ENCODE measurements at regions of chr17 and their contacts with region 1.

Region 1: DNA sequence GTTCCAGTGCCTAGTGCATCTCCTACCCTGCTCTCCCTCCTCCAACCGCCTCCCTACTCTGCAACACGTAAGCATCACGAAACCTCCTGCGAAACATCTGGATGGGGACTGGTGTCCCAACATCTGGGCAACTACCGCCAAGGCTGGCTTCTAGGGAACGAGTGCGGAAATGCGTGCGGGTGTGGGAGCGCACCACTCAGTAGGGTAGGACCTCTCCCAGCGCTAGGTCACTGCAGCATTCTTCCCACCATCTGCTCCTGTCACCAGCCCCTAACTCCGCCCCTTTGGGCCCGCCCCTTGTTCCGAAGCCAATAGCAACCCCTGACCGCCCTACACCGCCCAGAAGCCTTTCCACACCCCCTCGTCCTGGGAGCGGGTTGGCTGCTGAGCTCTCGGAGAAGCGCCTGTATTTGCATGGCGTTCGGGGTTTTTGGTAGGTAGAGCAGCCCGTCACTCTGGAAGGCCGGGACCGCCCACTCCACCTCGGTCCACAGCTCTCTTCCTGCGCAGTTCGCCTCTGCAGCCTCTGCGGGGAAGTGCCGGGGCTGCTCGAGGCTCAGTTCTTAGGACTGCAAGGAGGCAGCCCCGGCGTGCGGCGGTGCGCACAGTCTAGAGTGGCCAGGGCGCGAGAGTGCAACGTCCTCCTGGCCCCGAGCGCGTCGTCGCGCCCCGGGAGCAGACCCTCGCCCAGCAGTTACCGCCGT is at the start of gene HS3ST3B1:
- DNase-seq: peak; percentile 40
- H3K4me3 ChIP-seq: peak within 1 kb of the TSS; percentile 62
- H3K27ac ChIP-seq: no peak within 1 kb of the TSS
- H3K4me1 ChIP-seq: peaks cover 16% of the 10 kb centered on the region
- CTCF ChIP-seq: no peak
- total RNA-seq, gene HS3ST3B1: 0.03 TPM in 1 of 2 replicates, not detected in the other

Region 2: DNA sequence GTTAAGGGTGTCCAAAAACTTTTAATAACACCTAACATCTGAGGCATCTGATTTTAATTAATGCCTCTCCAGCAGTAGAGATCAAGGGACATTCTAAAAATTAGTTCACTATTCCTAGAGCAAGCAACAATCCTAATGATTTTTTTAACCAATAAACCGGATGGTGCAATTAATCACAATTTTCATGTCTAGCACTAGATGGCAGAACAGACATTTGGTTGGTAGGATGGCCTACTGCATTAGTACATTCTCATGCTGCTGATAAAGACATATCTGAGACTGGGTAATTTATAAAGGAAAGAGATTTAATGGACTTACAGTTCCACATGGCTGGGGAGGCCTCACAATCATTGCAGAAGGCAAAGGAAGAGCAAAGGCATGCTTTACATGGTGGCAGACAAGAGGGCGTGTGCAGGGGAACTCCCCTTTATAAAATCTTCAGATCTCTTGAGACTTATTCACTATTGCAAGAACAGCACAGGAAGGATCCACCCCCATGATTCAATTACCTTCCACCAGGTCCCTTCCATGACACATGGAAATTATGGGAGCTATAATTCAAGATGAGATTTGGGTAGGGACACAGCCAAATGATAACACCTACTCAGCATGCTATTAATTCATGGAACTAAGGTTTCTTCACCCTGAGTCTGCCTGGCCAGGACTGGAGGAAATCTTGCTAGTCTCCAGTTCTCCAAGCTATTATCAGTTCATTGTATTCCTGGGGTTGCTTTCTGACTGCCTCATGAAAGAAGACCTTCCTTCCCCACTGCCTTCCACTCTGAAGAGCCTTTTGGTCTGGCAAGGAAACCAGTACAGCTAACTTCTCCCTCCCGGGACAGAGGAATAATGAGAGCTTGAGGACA is 723.8 kb before region 1 on chr17:
- CTCF ChIA-PET with region 1: no interaction called
- POLR2A ChIA-PET with region 1: interaction called, 3 read pairs
- intact Hi-C with region 1: loop called (anchors 5 kb)
- DNase-seq: peak; percentile 22
- H3K4me3 ChIP-seq: no peak overlapping the region
- H3K27ac ChIP-seq: no peak overlapping the region
- H3K4me1 ChIP-seq: no peaks in the 10 kb centered on the region
- CTCF ChIP-seq: peak; percentile 65

Region 3: DNA sequence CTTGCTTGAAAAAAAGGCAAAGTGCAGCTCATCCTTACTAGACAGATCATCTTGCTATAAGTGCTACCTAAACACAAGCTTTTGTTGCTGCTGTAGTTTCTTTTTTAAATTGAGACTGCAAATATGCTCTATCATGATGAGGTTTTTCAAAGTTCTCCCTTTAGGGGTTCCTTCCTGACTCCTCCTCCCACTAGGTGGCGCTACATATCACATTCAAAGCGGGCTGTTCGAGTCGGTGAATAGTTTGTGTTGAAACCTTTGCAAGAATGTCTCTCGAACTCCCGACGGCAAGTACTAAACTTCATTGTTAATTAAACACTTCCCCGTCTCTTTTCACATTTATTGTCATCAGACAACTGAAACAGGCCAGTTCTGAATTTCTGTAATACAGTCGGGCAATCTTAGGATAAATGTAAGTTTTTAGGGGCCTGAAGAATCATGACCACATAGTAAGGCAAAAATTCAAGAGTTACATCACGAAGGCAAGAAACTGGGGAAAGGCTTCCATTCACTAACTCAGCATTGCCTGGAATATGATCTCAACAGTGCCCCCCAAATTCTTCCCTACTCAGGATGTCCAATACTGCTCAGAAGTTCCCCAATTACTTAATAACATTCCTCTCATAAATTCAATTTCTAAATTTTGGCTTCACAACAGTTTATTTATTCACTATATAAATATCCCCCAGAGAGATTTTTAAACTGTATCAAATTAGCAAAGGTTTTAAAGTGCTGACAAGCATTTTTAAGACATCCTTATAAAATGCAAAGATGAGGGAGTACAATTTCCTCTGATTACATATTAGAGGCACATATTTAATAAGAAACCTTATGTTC is 705.7 kb before region 1 on chr17:
- CTCF ChIA-PET with region 1: no interaction called
- POLR2A ChIA-PET with region 1: interaction called, 3 read pairs
- intact Hi-C with region 1: loop called (anchors 5 kb)
- DNase-seq: peak; percentile 81
- H3K4me3 ChIP-seq: no peak overlapping the region
- H3K27ac ChIP-seq: no peak overlapping the region
- H3K4me1 ChIP-seq: peaks cover 10% of the 10 kb centered on the region
- CTCF ChIP-seq: peak; percentile 98

Region 4: DNA sequence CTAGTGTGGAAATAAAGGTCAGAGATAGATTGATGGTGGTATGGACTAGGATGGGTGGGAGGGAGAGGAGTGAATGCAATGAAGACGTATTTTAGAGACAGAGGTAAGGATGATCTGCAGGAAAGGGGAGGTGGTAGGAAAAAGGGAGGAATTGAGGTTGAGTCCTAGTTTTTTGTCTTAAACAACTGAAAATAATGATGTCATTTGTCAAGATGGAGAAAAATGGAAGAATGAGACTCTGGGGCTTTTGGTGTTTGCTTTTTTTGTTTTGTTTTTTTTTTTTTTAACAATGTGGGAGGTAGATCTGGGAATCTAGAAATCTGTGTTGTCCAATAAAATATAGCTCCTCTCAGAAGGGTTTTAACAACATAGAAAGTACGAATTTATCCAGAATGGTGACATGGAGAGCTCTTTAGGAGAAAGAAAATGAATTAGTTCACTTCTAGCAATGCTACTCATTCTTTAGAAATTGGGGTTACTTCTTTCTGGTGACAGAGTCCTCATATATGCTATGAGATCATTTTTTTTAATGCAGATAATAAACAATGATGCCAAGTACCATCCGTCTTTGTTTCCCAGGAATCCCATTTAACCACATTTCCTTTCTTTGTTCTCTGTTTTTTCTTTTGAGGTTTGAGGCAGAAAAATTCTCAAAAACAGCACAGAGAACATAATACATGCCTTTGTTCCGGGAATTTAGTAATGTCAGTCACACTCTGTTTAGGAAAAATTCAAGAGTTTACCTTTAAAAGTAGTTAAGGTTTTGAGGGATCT is 456.7 kb before region 1 on chr17:
- CTCF ChIA-PET with region 1: no interaction called
- POLR2A ChIA-PET with region 1: no interaction called
- intact Hi-C with region 1: loop called (anchors 5 kb)
- DNase-seq: no peak
- H3K4me3 ChIP-seq: no peak overlapping the region
- H3K27ac ChIP-seq: no peak overlapping the region
- H3K4me1 ChIP-seq: no peaks in the 10 kb centered on the region
- CTCF ChIP-seq: no peak

Region 5: GRCh38 chr17:14330486-14331029 is 29.8 kb after region 1 on chr17:
- CTCF ChIA-PET with region 1: no interaction called
- POLR2A ChIA-PET with region 1: no interaction called
- intact Hi-C with region 1: no loop called
- DNase-seq: no peak
- H3K4me3 ChIP-seq: no peak overlapping the region
- H3K27ac ChIP-seq: no peak overlapping the region
- H3K4me1 ChIP-seq: peaks cover 7% of the 10 kb centered on the region
- CTCF ChIP-seq: no peak

Region 6: DNA sequence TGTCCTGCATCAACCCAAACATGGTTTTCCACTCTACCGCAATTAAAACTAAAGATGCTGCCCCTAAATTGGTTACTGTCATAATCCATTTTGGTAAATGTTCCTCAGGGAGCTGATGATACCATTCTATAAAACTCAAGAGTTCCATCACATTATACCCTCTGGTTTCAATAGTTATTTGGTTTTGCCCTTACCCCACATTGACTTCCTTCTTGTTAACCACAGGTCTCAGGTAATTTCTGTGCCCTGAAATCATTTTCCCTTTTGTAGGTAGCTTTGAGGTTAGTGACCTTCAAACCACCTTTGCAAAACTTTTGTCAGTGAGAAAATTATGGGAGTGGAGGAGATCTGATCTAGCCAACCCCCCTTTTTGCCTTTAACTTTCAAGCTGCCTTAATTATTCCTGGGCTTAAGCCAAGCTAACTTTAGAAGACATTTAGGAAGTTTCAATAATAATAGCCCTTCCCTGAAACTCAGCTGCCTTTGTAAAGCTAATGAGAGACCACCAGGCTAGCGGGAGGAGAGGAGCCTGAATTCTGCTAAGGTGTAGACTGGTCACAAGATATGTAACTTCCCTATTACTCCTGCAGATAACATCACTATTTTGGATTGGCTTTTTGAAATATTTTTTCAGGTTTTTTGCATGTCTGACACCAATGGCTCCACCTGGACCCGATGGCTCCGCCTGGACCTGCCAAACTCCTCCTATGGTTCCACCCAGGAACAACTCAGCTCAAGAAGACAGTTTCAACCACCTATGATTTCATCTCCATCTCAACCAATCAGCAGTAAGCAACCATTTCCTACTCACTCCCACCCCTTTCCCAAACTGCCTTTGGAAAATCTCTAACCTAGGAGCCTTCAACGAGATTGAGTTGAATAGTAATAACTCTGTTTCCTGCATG is 225.1 kb after region 1 on chr17:
- CTCF ChIA-PET with region 1: no interaction called
- POLR2A ChIA-PET with region 1: no interaction called
- intact Hi-C with region 1: no loop called
- DNase-seq: no peak
- H3K4me3 ChIP-seq: no peak overlapping the region
- H3K27ac ChIP-seq: no peak overlapping the region
- H3K4me1 ChIP-seq: peaks cover 10% of the 10 kb centered on the region
- CTCF ChIP-seq: no peak

Region 7: GRCh38 chr17:14790521-14790920 is 489.8 kb after region 1 on chr17:
- CTCF ChIA-PET with region 1: no interaction called
- POLR2A ChIA-PET with region 1: no interaction called
- intact Hi-C with region 1: loop called (anchors 10 kb)
- DNase-seq: peak; percentile 86
- H3K4me3 ChIP-seq: peak overlapping the region; percentile 45
- H3K27ac ChIP-seq: peak overlapping the region; percentile 66
- H3K4me1 ChIP-seq: peaks cover 65% of the 10 kb centered on the region
- CTCF ChIP-seq: no peak

Region 8: DNA sequence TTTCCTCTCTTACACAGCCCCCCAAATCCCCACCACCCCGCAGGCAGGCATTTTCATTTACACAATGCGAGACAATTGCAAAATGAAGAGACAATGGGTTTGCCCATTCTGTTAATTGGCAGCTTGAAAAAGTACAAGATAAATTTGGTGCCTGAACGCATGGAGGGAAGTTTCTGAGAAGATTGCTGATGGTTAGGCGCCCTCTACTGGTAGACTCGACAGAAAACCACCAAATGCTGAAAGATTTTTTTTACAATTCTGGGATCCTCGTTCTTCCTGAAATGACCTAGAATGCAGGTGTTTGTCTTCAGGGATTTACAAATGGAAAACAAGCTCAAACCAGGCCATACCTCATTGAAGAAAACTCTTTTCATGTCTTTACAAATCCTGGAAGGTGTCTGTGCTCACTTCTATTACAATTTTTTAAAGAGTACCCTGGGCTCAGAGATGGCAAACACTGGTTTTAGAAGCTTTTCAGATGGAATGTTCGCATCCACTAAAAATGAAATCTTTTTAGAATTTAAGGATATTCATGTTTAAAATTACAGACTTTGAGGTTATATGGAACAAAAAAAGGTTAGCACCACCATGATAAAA is 625.9 kb after region 1 on chr17:
- CTCF ChIA-PET with region 1: no interaction called
- POLR2A ChIA-PET with region 1: no interaction called
- intact Hi-C with region 1: loop called (anchors 10 kb)
- DNase-seq: peak; percentile 81
- H3K4me3 ChIP-seq: no peak overlapping the region
- H3K27ac ChIP-seq: no peak overlapping the region
- H3K4me1 ChIP-seq: peaks cover 8% of the 10 kb centered on the region
- CTCF ChIP-seq: peak; percentile 95